ENCODE measurements at regions of chr2 and their contacts with region 1.

Region 1: DNA sequence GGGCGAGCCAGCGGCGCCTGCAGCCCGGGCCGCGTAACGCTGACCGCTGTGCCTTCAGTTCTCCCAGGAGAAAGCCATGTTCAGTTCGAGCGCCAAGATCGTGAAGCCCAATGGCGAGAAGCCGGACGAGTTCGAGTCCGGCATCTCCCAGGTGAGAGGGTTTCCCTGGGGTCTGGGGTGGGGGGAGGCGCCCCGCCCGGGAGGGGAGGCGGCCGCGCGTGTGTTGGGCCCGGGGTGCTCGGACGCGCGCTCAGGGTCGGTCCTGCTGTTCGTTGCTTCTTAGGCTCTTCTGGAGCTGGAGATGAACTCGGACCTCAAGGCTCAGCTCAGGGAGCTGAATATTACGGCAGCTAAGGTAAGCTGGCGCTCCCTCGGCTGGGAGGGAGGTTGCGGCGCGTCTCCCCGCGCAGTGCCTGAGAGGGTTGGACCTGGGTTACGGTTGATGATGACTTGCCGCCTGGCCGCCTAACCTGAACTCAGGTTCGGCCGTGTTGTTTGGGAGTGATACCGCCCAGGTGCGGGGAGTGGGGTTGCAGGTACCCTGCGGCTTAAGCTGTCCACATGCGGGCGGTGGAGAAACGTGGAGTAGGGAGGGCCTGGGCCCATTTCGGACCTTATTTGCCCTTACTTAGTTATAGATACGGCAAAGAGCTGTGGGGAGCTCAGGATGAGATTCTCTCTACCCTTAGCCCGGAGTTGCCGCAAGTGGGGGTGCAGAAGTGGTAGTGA is 638 bp downstream of the RPS7 start:
- DNase-seq: peak in 2 of 3 donors; percentile 4 to 11
- H3K4me3 ChIP-seq: peak overlapping the region; percentile 67 to 83 (median 82)
- H3K4me3 Mint-ChIP-seq: peak overlapping the region; percentile 90 to 93
- H3K27ac ChIP-seq: peak overlapping the region; percentile 71 to 88
- H3K27ac Mint-ChIP-seq: peak overlapping the region; percentile 88 to 97 (median 95)
- H3K4me1 ChIP-seq: peaks cover 15 to 33% of the 10 kb centered on the region in 2 donors
- H3K4me1 Mint-ChIP-seq: peaks cover 27% of the 10 kb centered on the region
- H3K27me3 ChIP-seq: no peaks in the 10 kb centered on the region
- H3K27me3 Mint-ChIP-seq: peaks cover 2 to 4% (median 2%) of the 10 kb centered on the region in 3 donors
- CTCF ChIP-seq: no peak

Region 2: DNA sequence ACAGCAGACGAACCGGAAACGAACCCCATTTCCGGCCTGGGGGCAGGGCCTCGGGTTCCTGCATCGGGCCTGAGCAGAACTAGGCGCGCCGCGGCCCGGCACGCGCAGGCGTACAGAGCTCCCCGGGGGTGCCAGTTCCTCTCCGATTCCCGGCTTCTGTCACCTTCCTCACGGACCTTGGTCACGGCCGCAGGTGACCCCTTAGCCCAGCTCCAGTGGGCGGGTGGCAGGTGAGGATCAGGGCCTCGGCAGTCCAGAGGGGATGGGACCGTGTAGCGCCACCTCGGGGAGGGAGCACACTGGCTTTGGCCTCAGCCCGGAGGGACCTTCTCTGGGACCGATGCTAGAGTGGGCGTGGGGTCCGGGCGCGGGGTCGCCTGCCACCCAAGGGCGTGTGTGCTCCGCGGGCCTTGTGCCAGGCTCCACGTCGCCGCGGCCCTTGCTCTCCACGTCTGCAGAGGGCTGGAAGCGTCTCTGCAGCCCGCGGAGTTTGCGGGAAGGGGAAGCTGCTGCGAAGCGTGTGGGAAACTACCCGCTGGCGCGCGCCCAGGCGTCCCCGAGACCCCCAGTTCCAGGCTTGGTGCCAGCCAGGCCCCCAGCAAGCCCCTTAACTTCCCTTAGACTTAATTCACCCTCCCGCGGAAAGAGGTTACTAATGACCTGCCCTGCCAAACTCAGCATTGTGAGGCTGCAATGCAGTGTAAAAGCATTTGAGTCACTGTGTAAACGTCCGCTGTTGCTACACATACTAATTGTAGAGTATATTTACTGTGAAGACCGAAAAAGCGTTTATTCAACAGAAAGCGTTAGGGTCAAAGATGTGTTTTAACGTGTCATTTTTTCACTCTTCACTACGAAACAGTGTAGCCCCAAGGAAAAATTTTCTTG is 195.8 kb before region 1 on chr2 and contains the start of gene TRAPPC12:
- intact Hi-C with region 1: loop called (anchors 5 kb)
- DNase-seq: peak; percentile 81 to 89 (median 84)
- H3K4me3 ChIP-seq: peak within 1 kb of the TSS; percentile 52 to 96 (median 84)
- H3K4me3 Mint-ChIP-seq: peak within 1 kb of the TSS; percentile 92 to 96
- H3K27ac ChIP-seq: peak within 1 kb of the TSS; percentile 82 to 92
- H3K27ac Mint-ChIP-seq: peak within 1 kb of the TSS; percentile 91 to 97 (median 94)
- H3K4me1 ChIP-seq: peaks cover 36 to 41% of the 10 kb centered on the region in 2 donors
- H3K4me1 Mint-ChIP-seq: peaks cover 38% of the 10 kb centered on the region
- H3K27me3 ChIP-seq: no peaks in the 10 kb centered on the region
- H3K27me3 Mint-ChIP-seq: no peaks in the 10 kb centered on the region
- CTCF ChIP-seq: peak; percentile 28
- polyA plus RNA-seq, gene TRAPPC12: 26.6 to 72.1 (median 44.7) TPM

Region 3: GRCh38 chr2:3518496-3519254 is 57.0 kb before region 1 on chr2:
- intact Hi-C with region 1: loop called in 1 of 2 experiments (anchors 5 kb)
- DNase-seq: peak; percentile 93 to 95 (median 95)
- H3K4me3 ChIP-seq: peak overlapping the region; percentile 81 to 94 (median 88)
- H3K4me3 Mint-ChIP-seq: peak overlapping the region; percentile 88 to 93
- H3K27ac ChIP-seq: peak overlapping the region; percentile 74 to 87
- H3K27ac Mint-ChIP-seq: peak overlapping the region; percentile 65 to 88 (median 84)
- H3K4me1 ChIP-seq: peaks cover 18 to 30% of the 10 kb centered on the region in 2 donors
- H3K4me1 Mint-ChIP-seq: peaks cover 30% of the 10 kb centered on the region
- H3K27me3 ChIP-seq: no peaks in the 10 kb centered on the region
- H3K27me3 Mint-ChIP-seq: peaks cover 0 to 1% (median 0%) of the 10 kb centered on the region in 3 donors
- CTCF ChIP-seq: no peak

Region 4: DNA sequence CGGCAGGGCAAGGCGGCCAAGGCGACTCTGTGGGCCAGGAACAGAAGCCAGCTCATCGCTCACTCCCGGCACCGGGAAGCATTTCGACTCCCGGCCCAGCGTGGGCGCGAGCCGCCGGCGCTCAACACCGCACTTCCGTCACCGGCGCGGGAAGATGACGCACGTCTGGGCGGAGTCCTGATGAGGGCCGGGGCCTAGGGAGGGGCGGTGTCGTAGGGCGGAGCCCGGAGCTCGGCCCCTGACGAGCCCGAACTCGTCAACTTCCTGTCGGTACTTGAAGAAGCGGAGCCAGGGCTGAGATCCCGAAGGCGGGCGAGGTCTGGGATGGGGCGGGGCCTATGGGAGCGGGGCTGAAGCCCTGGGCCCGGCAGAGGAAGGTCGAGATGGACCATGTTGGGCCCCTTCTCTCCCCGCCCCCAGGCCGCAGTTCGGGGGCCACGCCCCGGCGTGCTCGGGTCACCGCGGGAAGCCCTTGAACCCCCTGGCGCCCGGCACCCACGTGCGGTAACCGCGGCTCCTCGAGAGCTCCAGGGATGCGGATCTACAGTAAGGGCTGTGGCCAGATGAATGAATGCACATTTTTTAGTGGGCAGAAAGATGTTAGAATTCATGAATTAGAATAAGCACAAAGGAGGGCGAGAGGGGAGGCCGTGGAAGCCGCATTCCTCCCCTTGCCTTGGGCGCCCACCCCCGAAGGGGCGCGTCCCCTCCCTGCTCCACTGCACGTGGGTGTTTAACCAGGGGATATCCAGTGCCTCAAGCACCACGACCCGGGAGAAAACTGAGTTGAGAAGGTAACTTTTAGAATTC is 17.3 kb before region 1 on chr2 and contains the start of gene RNASEH1:
- intact Hi-C with region 1: loop called (anchors 1 to 2 kb)
- DNase-seq: peak; percentile 98 to 99 (median 99)
- H3K4me3 ChIP-seq: peak within 1 kb of the TSS; percentile 82 to 92 (median 85)
- H3K4me3 Mint-ChIP-seq: peak within 1 kb of the TSS; percentile 85 to 90
- H3K27ac ChIP-seq: peak within 1 kb of the TSS; percentile 82 to 87
- H3K27ac Mint-ChIP-seq: peak within 1 kb of the TSS; percentile 86 to 96 (median 92)
- H3K4me1 ChIP-seq: peaks cover 18 to 24% of the 10 kb centered on the region in 2 donors
- H3K4me1 Mint-ChIP-seq: peaks cover 22% of the 10 kb centered on the region
- H3K27me3 ChIP-seq: no peaks in the 10 kb centered on the region
- H3K27me3 Mint-ChIP-seq: no peaks in the 10 kb centered on the region
- CTCF ChIP-seq: no peak
- polyA plus RNA-seq, gene RNASEH1: 6.8 to 16.4 (median 14.2) TPM